ENCODE measurements at regions of chr15 and their contacts with region 1.

Region 1: DNA sequence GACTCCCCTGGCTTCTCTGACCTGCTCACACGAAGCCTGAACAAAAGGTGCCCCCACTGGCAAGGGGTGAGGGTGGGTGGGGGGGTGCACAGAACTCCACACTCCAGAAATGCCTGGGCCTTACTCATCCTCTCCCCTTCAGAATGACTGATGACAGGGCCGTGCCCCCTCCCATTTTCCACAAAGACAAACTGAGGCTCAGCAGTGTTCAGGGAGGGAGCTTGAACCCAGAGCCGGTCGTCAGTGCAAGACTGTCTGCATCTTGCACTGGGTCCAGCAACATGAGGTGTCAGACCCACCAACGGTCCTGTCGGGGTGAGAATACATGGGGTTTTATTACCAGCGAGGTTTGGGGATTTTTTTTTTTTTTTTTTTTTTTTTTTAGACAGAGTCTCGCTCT is 15.3 kb downstream of the IGDCC3 start:
- DNase-seq: no peak
- H3K4me3 ChIP-seq: no peak overlapping the region
- H3K27ac ChIP-seq: no peak overlapping the region
- H3K4me1 ChIP-seq: no peaks in the 10 kb centered on the region
- H3K27me3 ChIP-seq: no peaks in the 10 kb centered on the region
- CTCF ChIP-seq: no peak

Region 2: GRCh38 chr15:64950888-64951287 is 411.6 kb before region 1 on chr15:
- CTCF ChIA-PET with region 1: no interaction called
- dilution Hi-C with region 1: no loop called
- in situ Hi-C with region 1: no loop called
- intact Hi-C with region 1: no loop called
- DNase-seq: peak; percentile 2
- H3K4me3 ChIP-seq: no peak overlapping the region
- H3K27ac ChIP-seq: no peak overlapping the region
- H3K4me1 ChIP-seq: no peaks in the 10 kb centered on the region
- H3K27me3 ChIP-seq: no peaks in the 10 kb centered on the region
- CTCF ChIP-seq: no peak

Region 3: GRCh38 chr15:65049418-65049840 is 313.1 kb before region 1 on chr15:
- CTCF ChIA-PET with region 1: no interaction called
- dilution Hi-C with region 1: no loop called
- in situ Hi-C with region 1: no loop called
- intact Hi-C with region 1: no loop called
- DNase-seq: peak; percentile 89
- H3K4me3 ChIP-seq: peak overlapping the region; percentile 11 to 45 (median 40)
- H3K27ac ChIP-seq: no peak overlapping the region
- H3K4me1 ChIP-seq: peaks cover 11% of the 10 kb centered on the region
- H3K27me3 ChIP-seq: no peaks in the 10 kb centered on the region
- CTCF ChIP-seq: no peak

Region 4: GRCh38 chr15:65156692-65157091 is 205.8 kb before region 1 on chr15:
- CTCF ChIA-PET with region 1: no interaction called
- dilution Hi-C with region 1: no loop called
- in situ Hi-C with region 1: no loop called
- intact Hi-C with region 1: no loop called
- DNase-seq: no peak
- H3K4me3 ChIP-seq: no peak overlapping the region
- H3K27ac ChIP-seq: no peak overlapping the region
- H3K4me1 ChIP-seq: no peaks in the 10 kb centered on the region
- H3K27me3 ChIP-seq: no peaks in the 10 kb centered on the region
- CTCF ChIP-seq: no peak

Region 5: DNA sequence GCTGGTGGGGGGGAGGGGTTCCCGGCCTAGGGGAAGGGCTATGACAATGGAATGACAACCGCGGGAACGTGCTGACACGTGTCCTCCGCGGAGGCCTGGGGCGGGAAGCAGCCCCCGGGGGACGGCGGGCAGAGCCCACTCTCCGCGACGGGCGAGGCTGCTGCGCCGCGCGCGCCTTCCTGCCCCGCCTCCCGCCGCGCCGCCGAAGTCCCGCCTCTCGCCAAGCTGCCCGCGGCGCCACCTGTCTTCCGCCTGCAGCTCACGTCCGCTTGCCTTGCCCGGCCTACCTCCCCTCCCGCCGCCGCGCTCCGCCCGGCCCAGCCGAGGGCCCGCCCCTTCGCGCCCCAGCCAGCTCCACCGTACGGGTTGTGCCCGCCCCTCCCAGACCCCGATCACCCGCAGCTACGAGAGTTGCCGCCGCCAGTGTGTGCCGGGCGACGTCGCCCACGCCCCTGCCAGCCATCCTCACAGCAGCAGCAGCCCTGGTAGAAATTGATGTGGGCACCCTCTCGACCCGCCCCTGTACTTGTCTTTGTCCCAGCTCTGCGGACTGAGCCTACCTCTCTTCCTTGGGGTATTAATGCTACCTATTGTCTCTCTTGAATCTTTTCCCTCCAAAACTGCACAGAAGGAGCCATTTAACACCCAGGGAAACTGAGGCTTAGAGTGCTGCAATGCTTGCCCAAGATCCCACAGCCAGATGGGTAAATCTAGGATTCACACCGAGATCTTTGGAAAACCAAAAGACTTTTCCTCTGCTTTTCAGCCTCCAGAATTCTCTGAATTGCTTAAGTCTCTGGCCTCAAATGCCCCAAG is 75.6 kb before region 1 on chr15 and contains the start of gene PARP16:
- CTCF ChIA-PET with region 1: interaction called, 18 read pairs
- dilution Hi-C with region 1: no loop called
- in situ Hi-C with region 1: no loop called
- intact Hi-C with region 1: no loop called
- DNase-seq: peak; percentile 83
- H3K4me3 ChIP-seq: peak within 1 kb of the TSS; percentile 57 to 78 (median 59)
- H3K27ac ChIP-seq: peak within 1 kb of the TSS; percentile 28
- H3K4me1 ChIP-seq: peaks cover 16% of the 10 kb centered on the region
- H3K27me3 ChIP-seq: no peaks in the 10 kb centered on the region
- CTCF ChIP-seq: peak in 1 of 2 donors; percentile 34
- total RNA-seq, gene PARP16: 4.9 to 5.2 TPM

Measured in mammary epithelial cell (primary cell).